Activated T-helper 1 cell treated with anti-CD3 and anti-CD28 coated beads, Interleukin-12 subunit alpha, Interleukin-12 subunit beta, Interleukin-2, Interleukin-4 antibody, amounts not matched to agents 30 ng/mL and 10 ng/mL and 1 ng/mL, durations not matched to agents 14 hours and 24 hours and 36 hours (primary cell): ENCODE measurements at regions of chr10 and their contacts with region 1.

Region 1: DNA sequence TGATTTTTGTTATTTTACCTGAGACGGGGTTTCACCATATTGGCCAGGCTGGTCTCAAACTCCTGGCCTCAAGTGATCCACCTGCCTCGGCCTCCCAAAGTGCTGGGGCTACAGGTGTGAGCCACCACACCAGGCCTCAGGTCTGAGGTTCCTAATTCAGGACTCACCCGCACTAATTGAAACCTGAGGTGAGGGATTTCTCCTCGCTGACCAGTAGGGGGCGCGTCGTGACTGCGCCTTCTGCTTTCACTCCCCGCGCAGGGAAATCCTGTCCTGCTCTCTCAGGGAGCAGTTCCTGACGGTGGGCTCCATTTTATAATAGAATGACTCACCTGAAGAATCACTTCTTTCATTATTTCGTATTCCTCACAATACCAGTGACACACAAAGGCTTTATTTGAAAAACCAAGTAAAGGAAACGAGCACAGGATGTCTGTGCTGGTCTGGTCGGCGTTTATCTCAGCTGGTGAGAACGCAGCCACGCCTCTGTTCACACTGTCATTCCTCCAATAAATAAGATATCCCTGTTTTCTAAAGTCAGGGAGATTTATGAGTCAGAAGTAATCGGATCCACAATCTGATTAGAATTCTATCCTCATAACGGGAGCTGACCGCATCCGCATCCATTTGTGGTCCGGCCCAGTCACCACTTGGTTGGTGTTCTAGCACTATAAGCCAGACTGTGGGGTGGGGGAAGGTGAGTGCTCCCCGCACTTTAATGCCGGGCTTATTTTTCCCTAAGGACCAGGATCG is 35.4 kb downstream of the BAG3 start:
- DNase-seq: peak; percentile 59
- H3K4me3 Mint-ChIP-seq: peak overlapping the region; percentile 27
- H3K27ac Mint-ChIP-seq: peak overlapping the region; percentile 67
- H3K4me1 Mint-ChIP-seq: peaks cover 27% of the 10 kb centered on the region
- H3K27me3 Mint-ChIP-seq: peaks cover 7% of the 10 kb centered on the region

Region 2: DNA sequence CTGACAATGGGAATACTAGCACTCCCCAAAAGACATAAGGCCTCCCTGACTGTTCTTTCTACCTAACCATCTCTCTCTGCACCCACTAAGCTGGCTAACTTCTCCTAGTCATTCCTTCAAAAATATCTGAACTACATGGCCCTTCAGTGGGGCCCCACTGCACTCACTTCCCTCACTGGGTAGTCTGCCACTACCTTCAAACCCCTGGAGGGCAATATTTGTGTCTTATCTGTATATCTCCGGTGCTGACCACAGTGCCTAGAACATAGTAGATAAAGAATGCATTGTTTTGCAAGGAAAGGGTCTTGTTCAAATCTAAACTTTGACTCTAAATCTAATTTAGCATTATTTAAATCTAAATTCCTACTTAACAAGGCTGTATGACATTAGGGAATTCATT is 976.1 kb before region 1 on chr10:
- intact Hi-C with region 1: no loop called
- DNase-seq: no peak
- H3K4me3 Mint-ChIP-seq: no peak overlapping the region
- H3K27ac Mint-ChIP-seq: no peak overlapping the region
- H3K4me1 Mint-ChIP-seq: peaks cover 13% of the 10 kb centered on the region
- H3K27me3 Mint-ChIP-seq: no peaks in the 10 kb centered on the region

Region 3: GRCh38 chr10:119663866-119664616 is 22.6 kb before region 1 on chr10:
- intact Hi-C with region 1: no loop called
- DNase-seq: peak; percentile 13
- H3K4me3 Mint-ChIP-seq: peak overlapping the region; percentile 57
- H3K27ac Mint-ChIP-seq: peak overlapping the region; percentile 87
- H3K4me1 Mint-ChIP-seq: peaks cover 50% of the 10 kb centered on the region
- H3K27me3 Mint-ChIP-seq: no peaks in the 10 kb centered on the region

Region 4: GRCh38 chr10:119705434-119705831 is 18.8 kb after region 1 on chr10:
- intact Hi-C with region 1: loop called (anchors 1 kb)
- DNase-seq: no peak
- H3K4me3 Mint-ChIP-seq: peak overlapping the region; percentile 74
- H3K27ac Mint-ChIP-seq: peak overlapping the region; percentile 99
- H3K4me1 Mint-ChIP-seq: peaks cover 82% of the 10 kb centered on the region
- H3K27me3 Mint-ChIP-seq: peaks cover 2% of the 10 kb centered on the region

Region 5: DNA sequence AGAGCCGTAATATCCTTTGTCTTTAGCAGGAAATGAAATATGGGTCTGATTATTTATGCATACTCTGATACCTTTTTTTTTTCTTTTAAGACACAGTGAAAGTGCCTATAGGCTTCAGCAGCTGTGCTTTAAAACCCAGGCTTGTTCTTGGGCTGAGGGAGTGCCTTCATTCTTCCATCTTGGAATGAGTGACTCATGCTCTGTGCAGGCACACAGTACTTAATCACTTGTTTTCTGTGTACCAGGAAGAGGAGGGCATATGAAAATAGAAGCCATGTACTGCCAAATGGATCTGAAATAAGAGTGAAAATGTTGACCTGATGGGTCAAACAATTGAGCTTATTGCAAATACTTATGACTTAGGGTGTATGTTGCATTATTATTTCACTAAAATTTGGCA is 51.2 kb after region 1 on chr10:
- intact Hi-C with region 1: no loop called
- DNase-seq: no peak
- H3K4me3 Mint-ChIP-seq: no peak overlapping the region
- H3K27ac Mint-ChIP-seq: no peak overlapping the region
- H3K4me1 Mint-ChIP-seq: peaks cover 13% of the 10 kb centered on the region
- H3K27me3 Mint-ChIP-seq: no peaks in the 10 kb centered on the region

Region 6: DNA sequence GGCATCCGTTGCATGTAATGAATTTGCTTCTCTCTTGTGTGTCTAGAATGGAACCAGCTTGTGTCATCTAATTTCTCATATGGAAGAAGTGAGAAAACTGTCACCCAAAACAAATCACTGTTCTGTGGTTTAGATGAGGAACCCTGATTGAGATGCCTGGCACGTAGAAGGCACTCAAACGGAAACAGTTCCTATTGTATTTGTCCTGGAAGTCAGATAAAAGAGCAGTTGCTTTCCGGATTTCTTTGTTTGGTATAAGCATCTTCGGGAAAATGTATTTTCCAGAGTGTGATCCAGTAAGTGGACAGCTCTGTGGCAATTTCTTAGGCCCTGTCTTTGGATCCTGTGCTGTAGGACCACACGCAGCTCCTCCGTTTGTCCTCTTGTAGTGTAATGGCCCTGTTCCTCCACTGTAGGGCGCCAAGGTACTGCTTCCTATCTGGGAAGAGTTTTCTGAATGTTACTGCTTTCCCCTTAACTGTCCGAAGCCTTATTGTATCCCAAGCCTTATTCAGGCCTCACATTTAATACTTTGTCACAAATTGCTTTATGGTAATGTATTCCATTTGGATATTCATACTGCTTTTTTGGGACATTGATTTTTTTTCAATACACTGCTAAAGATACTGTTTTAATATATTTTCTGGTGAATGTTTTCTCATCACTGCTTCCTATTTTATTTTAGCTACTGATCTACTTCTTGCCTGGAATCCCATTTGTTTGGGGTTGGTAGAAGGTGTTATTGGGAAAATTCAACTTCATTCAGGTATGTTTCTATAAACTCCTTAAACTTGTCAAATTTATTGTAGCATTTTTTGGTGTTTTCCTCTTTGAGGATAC is 64.0 kb after region 1 on chr10:
- intact Hi-C with region 1: loop called (anchors 1 kb)
- DNase-seq: peak; percentile 39
- H3K4me3 Mint-ChIP-seq: no peak overlapping the region
- H3K27ac Mint-ChIP-seq: no peak overlapping the region
- H3K4me1 Mint-ChIP-seq: peaks cover 7% of the 10 kb centered on the region
- H3K27me3 Mint-ChIP-seq: no peaks in the 10 kb centered on the region

Region 7: DNA sequence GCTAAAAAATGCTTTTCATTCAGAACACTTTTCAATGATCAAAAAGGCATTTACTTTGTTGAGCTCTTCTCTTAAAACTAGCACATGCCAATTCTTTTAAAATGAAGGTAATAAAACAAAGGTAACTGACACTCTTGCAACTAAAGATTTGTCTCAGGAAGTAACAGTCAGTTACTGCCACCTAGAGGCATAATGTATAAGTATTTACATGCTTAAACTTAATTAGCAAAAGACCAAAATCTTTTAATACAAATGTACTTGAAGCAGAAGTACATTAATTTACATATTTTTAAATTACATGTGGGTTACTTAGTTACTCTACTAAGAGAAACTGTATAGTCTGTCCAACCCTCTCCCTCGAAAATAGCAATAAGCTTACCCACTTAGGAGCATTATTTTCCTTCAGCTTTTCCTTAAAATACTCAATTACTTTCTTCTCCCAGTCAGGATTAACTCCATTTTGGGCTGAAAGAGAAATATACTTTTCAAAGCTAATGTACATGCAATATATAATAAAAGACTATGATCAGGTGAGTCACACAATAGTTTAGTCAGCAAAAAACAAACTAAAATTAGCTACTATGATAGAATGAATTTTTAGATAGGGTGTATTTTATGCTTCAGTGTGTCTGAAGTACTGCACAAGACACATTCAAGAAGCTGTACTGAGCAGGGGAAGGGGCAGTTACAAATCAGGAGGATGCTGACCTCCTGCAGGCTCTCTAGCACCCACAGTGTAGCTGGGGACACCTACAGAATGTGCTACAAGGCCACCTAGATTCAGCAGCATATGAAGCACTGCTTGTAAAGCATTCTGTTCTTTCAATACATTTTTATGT is 173.0 kb after region 1 on chr10:
- intact Hi-C with region 1: loop called (anchors 1 kb)
- DNase-seq: no peak
- H3K4me3 Mint-ChIP-seq: no peak overlapping the region
- H3K27ac Mint-ChIP-seq: peak overlapping the region; percentile 35
- H3K4me1 Mint-ChIP-seq: peaks cover 45% of the 10 kb centered on the region
- H3K27me3 Mint-ChIP-seq: no peaks in the 10 kb centered on the region